CD4-positive, alpha-beta memory T cell (primary cell): ENCODE measurements at regions of chr12 and their contacts with region 1.

Region 1: DNA sequence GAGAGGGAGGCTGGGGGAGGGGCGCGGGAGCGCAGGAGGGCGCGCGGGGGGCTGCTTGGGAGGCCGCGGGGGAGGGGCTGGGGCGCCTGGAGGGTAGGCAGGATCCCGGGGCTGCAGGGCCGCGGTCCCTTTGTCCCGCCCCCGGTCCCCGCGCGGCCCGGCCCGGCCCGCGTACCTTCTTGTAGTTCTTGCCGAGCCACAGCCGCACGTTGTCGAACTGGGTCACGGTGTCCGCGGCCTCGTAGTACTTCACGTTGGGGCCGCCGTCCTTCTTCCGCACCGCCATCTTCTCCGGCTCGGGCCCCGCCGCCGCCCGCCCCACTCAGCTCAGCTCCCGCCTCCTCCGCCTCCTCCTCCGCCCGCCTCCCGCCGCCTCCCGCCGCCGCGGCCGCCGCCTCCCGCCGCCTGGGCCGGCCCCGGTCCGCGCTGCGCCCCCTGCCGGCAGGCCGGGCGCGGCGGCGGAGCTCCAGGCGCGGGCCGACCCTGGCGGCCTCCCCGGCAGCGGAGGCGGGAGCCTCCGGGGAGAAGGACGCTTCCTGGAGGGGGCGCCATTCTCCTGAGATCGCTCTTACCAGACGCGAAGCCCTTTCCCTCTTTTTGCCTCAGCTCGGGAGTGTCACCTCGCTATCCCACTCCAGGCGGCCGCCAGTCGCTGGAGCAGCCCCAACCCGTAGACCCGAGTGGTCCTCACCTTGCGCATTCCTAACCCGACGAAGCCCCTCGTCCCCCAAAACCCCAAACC is at the start of gene SMARCC2:
- DNase-seq: peak; percentile 84 to 88 (median 85)
- H3K4me3 ChIP-seq: peak within 1 kb of the TSS; percentile 87 to 93
- H3K4me3 Mint-ChIP-seq: peak within 1 kb of the TSS; percentile 94 to 98 (median 96)
- H3K27ac ChIP-seq: peak within 1 kb of the TSS; percentile 91
- H3K27ac Mint-ChIP-seq: peak within 1 kb of the TSS; percentile 97 to 100 (median 98)
- H3K4me1 ChIP-seq: peaks cover 24% of the 10 kb centered on the region
- H3K4me1 Mint-ChIP-seq: peaks cover 27 to 54% (median 43%) of the 10 kb centered on the region in 4 donors
- H3K27me3 ChIP-seq: no peaks in the 10 kb centered on the region
- H3K27me3 Mint-ChIP-seq: peaks cover 0 to 2% of the 10 kb centered on the region in 2 donors
- total RNA-seq, gene SMARCC2: 192 to 199 TPM

Region 2: DNA sequence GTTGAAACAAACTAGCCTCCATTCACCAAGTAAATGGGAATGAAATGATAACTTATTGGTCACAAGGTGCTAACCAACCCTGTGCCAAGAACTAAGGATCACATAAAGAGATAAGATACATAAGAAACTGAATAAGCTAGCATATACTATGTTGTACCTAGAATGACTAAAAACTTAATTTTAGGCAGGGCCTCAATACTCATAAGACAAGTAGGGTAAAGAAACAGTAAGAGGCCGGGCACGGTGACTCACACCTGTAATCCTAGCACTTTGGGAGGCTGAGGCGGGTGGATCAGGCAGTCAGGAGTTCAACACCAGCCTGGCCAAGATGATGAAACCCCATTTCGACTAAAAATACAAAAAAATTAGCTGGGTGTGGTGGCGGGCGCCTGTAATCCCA is 428.7 kb before region 1 on chr12:
- CTCF ChIA-PET with region 1: no interaction called
- POLR2A ChIA-PET with region 1: no interaction called
- intact Hi-C with region 1: no loop called
- DNase-seq: no peak
- H3K4me3 ChIP-seq: no peak overlapping the region
- H3K4me3 Mint-ChIP-seq: no peak overlapping the region
- H3K27ac ChIP-seq: no peak overlapping the region
- H3K27ac Mint-ChIP-seq: peak overlapping the region; percentile 6 to 84 (median 36)
- H3K4me1 ChIP-seq: no peaks in the 10 kb centered on the region
- H3K4me1 Mint-ChIP-seq: peaks cover 0 to 4% (median 2%) of the 10 kb centered on the region in 4 donors
- H3K27me3 ChIP-seq: no peaks in the 10 kb centered on the region
- H3K27me3 Mint-ChIP-seq: no peaks in the 10 kb centered on the region

Region 3: GRCh38 chr12:56104109-56104814 is 85.1 kb before region 1 on chr12 and contains the start of gene PA2G4:
- CTCF ChIA-PET with region 1: interaction called, 16 read pairs
- POLR2A ChIA-PET with region 1: interaction called, 38 read pairs
- intact Hi-C with region 1: no loop called
- DNase-seq: peak; percentile 95 to 97 (median 96)
- H3K4me3 ChIP-seq: peak within 1 kb of the TSS; percentile 62 to 90
- H3K4me3 Mint-ChIP-seq: peak within 1 kb of the TSS; percentile 89 to 99 (median 96)
- H3K27ac ChIP-seq: peak within 1 kb of the TSS; percentile 82
- H3K27ac Mint-ChIP-seq: peak within 1 kb of the TSS; percentile 97 to 100 (median 98)
- H3K4me1 ChIP-seq: peaks cover 49% of the 10 kb centered on the region
- H3K4me1 Mint-ChIP-seq: peaks cover 34 to 62% (median 47%) of the 10 kb centered on the region in 4 donors
- H3K27me3 ChIP-seq: no peaks in the 10 kb centered on the region
- H3K27me3 Mint-ChIP-seq: no peaks in the 10 kb centered on the region
- total RNA-seq, gene PA2G4: 106 to 108 TPM

Region 4: DNA sequence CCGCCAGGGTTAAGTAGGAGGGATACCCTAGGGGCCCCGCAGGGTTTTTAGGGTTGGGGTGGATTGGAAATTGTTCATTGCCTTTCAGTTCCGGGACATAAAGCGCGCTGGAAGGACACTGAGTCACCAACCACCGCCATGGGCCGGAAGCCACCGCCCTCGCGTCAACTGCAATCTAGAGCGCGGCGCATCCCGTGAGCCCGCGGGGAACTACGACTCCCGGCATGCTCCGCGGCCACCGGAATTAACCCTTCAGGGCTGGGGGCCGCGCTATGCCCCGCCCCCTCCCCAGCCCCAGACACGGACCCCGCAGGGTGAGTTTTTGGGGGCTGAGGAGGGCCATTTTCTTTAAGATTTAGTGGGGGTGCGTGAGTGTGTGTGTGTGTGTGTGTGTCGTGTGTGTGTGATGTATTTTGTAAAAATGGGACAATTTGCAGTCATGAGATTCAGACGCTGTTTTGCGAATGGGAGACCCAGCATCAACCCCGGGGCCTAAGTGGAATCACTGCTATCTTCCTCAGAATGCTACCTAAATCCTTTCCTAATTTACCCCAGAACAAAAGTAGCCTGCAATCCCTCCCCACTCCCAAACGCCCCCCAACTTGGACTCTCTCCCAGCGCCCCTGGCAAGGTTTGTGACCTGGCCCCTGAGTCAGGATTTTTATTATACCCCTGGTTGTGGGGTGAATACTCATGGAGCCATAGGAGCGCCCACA is 36.9 kb before region 1 on chr12 and contains the start of gene MYL6B:
- CTCF ChIA-PET with region 1: interaction called, 6 read pairs
- POLR2A ChIA-PET with region 1: interaction called, 126 read pairs
- intact Hi-C with region 1: loop called (anchors 1 kb)
- DNase-seq: peak; percentile 87 to 94 (median 88)
- H3K4me3 ChIP-seq: peak within 1 kb of the TSS; percentile 66 to 91
- H3K4me3 Mint-ChIP-seq: peak within 1 kb of the TSS; percentile 91 to 96 (median 94)
- H3K27ac ChIP-seq: peak within 1 kb of the TSS; percentile 84
- H3K27ac Mint-ChIP-seq: peak within 1 kb of the TSS; percentile 93 to 99 (median 97)
- H3K4me1 ChIP-seq: peaks cover 35% of the 10 kb centered on the region
- H3K4me1 Mint-ChIP-seq: peaks cover 16 to 49% (median 28%) of the 10 kb centered on the region in 4 donors
- H3K27me3 ChIP-seq: no peaks in the 10 kb centered on the region
- H3K27me3 Mint-ChIP-seq: no peaks in the 10 kb centered on the region
- total RNA-seq, gene MYL6B: 2.6 to 3.4 TPM

Region 5: DNA sequence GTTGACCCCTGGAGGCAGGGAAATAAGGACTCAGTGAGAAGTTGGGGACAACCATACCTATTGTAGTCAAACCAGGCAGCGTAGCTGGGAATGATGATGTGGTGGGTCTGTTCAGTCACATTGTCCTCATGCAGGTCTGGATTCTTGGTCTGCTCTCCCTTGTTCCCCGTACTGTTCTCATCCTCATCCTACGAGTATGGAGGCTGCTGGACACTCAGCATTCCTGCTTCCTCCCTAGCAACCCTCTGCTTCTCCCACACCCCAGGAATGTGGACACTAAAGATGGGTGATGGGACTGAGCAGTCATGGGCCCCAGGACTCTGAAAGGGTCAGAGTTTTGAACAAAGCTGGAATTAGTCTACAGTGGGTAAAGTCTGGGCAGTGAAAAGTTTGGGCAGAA is 11.0 kb before region 1 on chr12:
- CTCF ChIA-PET with region 1: interaction called, 14 read pairs
- POLR2A ChIA-PET with region 1: interaction called, 13 read pairs
- intact Hi-C with region 1: no loop called
- DNase-seq: no peak
- H3K4me3 ChIP-seq: no peak overlapping the region
- H3K4me3 Mint-ChIP-seq: no peak overlapping the region
- H3K27ac ChIP-seq: no peak overlapping the region
- H3K27ac Mint-ChIP-seq: peak overlapping the region in 3 of 7 donors; percentile 18 to 43 (median 39)
- H3K4me1 ChIP-seq: no peaks in the 10 kb centered on the region
- H3K4me1 Mint-ChIP-seq: peaks cover 0 to 3% (median 0%) of the 10 kb centered on the region in 4 donors
- H3K27me3 ChIP-seq: no peaks in the 10 kb centered on the region
- H3K27me3 Mint-ChIP-seq: no peaks in the 10 kb centered on the region

Region 6: GRCh38 chr12:56258057-56258819 is 68.9 kb after region 1 on chr12 and contains the start of gene ANKRD52:
- CTCF ChIA-PET with region 1: interaction called, 8 read pairs
- POLR2A ChIA-PET with region 1: interaction called, 18 read pairs
- intact Hi-C with region 1: loop called (anchors 1 kb)
- DNase-seq: peak; percentile 76 to 87 (median 82)
- H3K4me3 ChIP-seq: peak within 1 kb of the TSS; percentile 85 to 95
- H3K4me3 Mint-ChIP-seq: peak within 1 kb of the TSS; percentile 89 to 97 (median 92)
- H3K27ac ChIP-seq: peak within 1 kb of the TSS; percentile 81
- H3K27ac Mint-ChIP-seq: peak within 1 kb of the TSS; percentile 82 to 95 (median 91)
- H3K4me1 ChIP-seq: peaks cover 21% of the 10 kb centered on the region
- H3K4me1 Mint-ChIP-seq: peaks cover 13 to 31% (median 19%) of the 10 kb centered on the region in 4 donors
- H3K27me3 ChIP-seq: no peaks in the 10 kb centered on the region
- H3K27me3 Mint-ChIP-seq: no peaks in the 10 kb centered on the region
- total RNA-seq, gene ANKRD52: 44.1 to 44.5 TPM

Region 7: DNA sequence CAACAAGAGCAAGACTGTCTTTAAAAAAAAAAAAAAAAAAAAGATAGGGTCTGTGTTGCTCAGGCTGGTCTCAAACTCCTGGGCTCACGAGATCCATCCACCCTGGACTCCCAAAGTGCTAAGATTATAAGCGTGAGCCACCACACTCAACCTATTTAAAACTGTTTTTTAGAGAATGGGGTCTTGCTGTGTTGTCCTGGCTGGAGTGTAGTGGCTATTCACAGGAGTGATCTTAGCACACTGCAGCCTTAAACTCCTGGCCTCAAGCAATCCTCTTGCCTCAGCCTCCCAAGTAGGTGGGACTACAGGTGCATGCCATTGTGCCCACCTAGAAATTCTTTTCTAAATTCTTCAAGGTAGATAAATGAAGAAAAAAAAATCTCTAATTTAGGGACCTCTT is 85.0 kb after region 1 on chr12:
- CTCF ChIA-PET with region 1: no interaction called
- POLR2A ChIA-PET with region 1: no interaction called
- intact Hi-C with region 1: no loop called
- DNase-seq: no peak
- H3K4me3 ChIP-seq: no peak overlapping the region
- H3K4me3 Mint-ChIP-seq: no peak overlapping the region
- H3K27ac ChIP-seq: no peak overlapping the region
- H3K27ac Mint-ChIP-seq: peak overlapping the region in 1 of 7 donors; percentile 43
- H3K4me1 ChIP-seq: no peaks in the 10 kb centered on the region
- H3K4me1 Mint-ChIP-seq: no peaks in the 10 kb centered on the region
- H3K27me3 ChIP-seq: no peaks in the 10 kb centered on the region
- H3K27me3 Mint-ChIP-seq: no peaks in the 10 kb centered on the region

Region 8: DNA sequence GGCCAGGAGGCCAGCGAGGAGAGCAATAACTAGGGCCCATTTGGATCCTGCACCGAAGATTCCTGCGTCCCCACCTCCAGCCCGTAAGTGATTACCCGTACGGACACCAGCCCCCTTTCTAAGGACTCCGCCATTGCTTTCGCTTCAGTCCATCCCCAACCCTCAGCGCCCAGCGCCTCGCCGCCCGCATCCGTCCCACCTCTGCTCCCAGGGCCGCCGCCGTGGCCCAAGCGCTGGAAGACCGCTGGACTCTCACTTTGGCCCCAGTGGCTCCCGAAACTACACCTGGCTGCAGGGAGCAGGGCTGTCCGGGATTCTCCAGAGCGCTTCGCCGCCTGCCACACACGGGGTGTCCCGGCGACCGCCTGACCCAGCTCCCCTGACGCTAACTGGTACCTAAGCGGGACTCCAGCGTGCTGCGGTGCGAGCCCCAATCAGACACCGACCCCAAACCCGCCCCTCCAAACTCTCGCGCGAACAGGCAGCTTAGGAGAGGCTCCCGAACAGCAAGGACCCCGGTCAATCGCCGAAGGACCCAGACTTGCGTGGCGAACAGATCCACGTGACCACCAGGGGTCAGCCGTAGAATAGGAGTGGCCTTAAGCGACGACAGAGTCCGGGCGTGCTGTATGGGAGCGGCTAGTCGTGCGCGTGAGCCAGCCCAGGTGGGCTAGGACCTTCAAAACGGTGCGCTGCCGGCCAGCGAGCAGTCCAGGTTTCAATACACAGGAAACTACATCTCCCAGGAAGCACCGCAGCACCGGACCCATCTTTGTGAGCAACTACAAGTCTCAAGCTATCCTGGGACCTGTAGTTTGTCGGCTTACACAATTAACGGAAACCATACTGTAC is 126.5 kb after region 1 on chr12 and contains the start of gene CNPY2:
- CTCF ChIA-PET with region 1: interaction called, 7 read pairs
- POLR2A ChIA-PET with region 1: interaction called, 11 read pairs
- intact Hi-C with region 1: no loop called
- DNase-seq: peak; percentile 93 to 97 (median 95)
- H3K4me3 ChIP-seq: peak within 1 kb of the TSS; percentile 99 to 100
- H3K4me3 Mint-ChIP-seq: peak within 1 kb of the TSS; percentile 97 to 100 (median 98)
- H3K27ac ChIP-seq: peak within 1 kb of the TSS; percentile 95
- H3K27ac Mint-ChIP-seq: peak within 1 kb of the TSS; percentile 98 to 100 (median 99)
- H3K4me1 ChIP-seq: peaks cover 18% of the 10 kb centered on the region
- H3K4me1 Mint-ChIP-seq: peaks cover 1 to 25% (median 13%) of the 10 kb centered on the region in 4 donors
- H3K27me3 ChIP-seq: no peaks in the 10 kb centered on the region
- H3K27me3 Mint-ChIP-seq: no peaks in the 10 kb centered on the region
- total RNA-seq, gene CNPY2: 93.5 to 95.8 TPM

Region 9: GRCh38 chr12:56326533-56326932 is 137.2 kb after region 1 on chr12:
- CTCF ChIA-PET with region 1: no interaction called
- POLR2A ChIA-PET with region 1: no interaction called
- intact Hi-C with region 1: no loop called
- DNase-seq: no peak
- H3K4me3 ChIP-seq: no peak overlapping the region
- H3K4me3 Mint-ChIP-seq: no peak overlapping the region
- H3K27ac ChIP-seq: no peak overlapping the region
- H3K27ac Mint-ChIP-seq: peak overlapping the region in 2 of 7 donors; percentile 7 to 70
- H3K4me1 ChIP-seq: no peaks in the 10 kb centered on the region
- H3K4me1 Mint-ChIP-seq: peaks cover 0 to 10% (median 2%) of the 10 kb centered on the region in 4 donors
- H3K27me3 ChIP-seq: no peaks in the 10 kb centered on the region
- H3K27me3 Mint-ChIP-seq: no peaks in the 10 kb centered on the region

Region 10: GRCh38 chr12:56468216-56469006 is 279.1 kb after region 1 on chr12 and contains the start of gene SPRYD4:
- CTCF ChIA-PET with region 1: interaction called, 13 read pairs
- POLR2A ChIA-PET with region 1: interaction called, 23 read pairs
- intact Hi-C with region 1: loop called (anchors 1 kb)
- DNase-seq: peak; percentile 94 to 96 (median 95)
- H3K4me3 ChIP-seq: peak within 1 kb of the TSS; percentile 90 to 98
- H3K4me3 Mint-ChIP-seq: peak within 1 kb of the TSS; percentile 93 to 98 (median 96)
- H3K27ac ChIP-seq: peak within 1 kb of the TSS; percentile 73
- H3K27ac Mint-ChIP-seq: peak within 1 kb of the TSS; percentile 94 to 99 (median 98)
- H3K4me1 ChIP-seq: peaks cover 26% of the 10 kb centered on the region
- H3K4me1 Mint-ChIP-seq: peaks cover 14 to 44% (median 26%) of the 10 kb centered on the region in 4 donors
- H3K27me3 ChIP-seq: no peaks in the 10 kb centered on the region
- H3K27me3 Mint-ChIP-seq: no peaks in the 10 kb centered on the region
- total RNA-seq, gene SPRYD4: 6.5 to 6.9 TPM